Posterior vena cava (tissue), 2 donors: ENCODE measurements at regions of chr13 and their contacts with region 1.

Region 1: GRCh38 chr13:92967923-92968322 is 258.7 kb upstream of the GPC6 start:
- DNase-seq: no peak

Region 2: GRCh38 chr13:91331047-91331915 is 1636.6 kb before region 1 on chr13:
- intact Hi-C with region 1: no loop called
- DNase-seq: no peak

Region 3: GRCh38 chr13:92941167-92941566 is 26.8 kb before region 1 on chr13:
- intact Hi-C with region 1: no loop called
- DNase-seq: no peak

Region 4: GRCh38 chr13:92984151-92984550 is 16.2 kb after region 1 on chr13:
- intact Hi-C with region 1: no loop called
- DNase-seq: no peak

Region 5: GRCh38 chr13:94033830-94034642 is 1066.1 kb after region 1 on chr13:
- intact Hi-C with region 1: loop called in 1 of 2 experiments (anchors 5 kb)
- DNase-seq: no peak